Activated CD4-positive, alpha-beta memory T cell treated with anti-CD3 and anti-CD28 coated beads for 36 hours (primary cell): ENCODE measurements at regions of chr5 and their contacts with region 1.

Region 1: GRCh38 chr5:131382407-131383395 is 118.8 kb downstream of the CDC42SE2 start:
- DNase-seq: peak; percentile 58
- H3K4me3 Mint-ChIP-seq: peak overlapping the region; percentile 39
- H3K27ac Mint-ChIP-seq: peak overlapping the region; percentile 94
- H3K4me1 Mint-ChIP-seq: peaks cover 91% of the 10 kb centered on the region
- H3K27me3 Mint-ChIP-seq: no peaks in the 10 kb centered on the region

Region 2: GRCh38 chr5:131186561-131187256 is 196.0 kb before region 1 on chr5:
- CTCF ChIA-PET with region 1: no interaction called
- POLR2A ChIA-PET with region 1: no interaction called
- intact Hi-C with region 1: no loop called
- DNase-seq: no peak
- H3K4me3 Mint-ChIP-seq: no peak overlapping the region
- H3K27ac Mint-ChIP-seq: no peak overlapping the region
- H3K4me1 Mint-ChIP-seq: no peaks in the 10 kb centered on the region
- H3K27me3 Mint-ChIP-seq: no peaks in the 10 kb centered on the region

Region 3: DNA sequence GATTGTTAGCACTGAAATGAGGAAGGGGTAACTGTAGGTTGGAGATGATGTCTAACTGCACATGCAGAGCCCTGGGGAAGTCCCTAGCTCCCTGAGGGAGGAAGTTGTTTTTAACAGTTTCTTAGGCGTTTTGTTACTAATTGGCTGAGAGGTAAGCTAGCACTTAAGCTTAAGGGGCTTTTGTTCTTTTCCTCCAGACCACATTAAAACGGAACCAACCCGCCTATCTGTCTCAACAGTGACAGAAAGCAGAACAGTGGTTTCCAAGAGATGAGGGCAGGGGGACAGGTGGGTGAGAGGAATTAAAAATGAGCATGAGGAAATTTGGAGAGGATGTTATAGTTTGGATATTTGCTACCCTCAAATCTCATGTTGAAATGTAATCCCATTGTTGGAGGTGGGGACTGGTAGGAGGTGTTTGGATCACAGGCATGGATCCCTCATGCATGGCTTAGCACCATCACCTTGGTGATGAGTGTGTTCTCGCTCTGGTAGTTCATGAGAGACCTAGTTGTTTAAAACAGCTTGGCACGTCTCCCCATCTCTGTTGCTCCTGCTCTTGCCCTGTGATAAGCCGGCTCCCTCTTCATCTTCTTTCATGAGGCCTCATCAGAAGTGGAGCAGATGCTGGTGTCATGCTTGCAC is 173.1 kb before region 1 on chr5:
- CTCF ChIA-PET with region 1: interaction called, 3 read pairs
- POLR2A ChIA-PET with region 1: interaction called, 3 read pairs
- intact Hi-C with region 1: loop called (anchors 2 kb)
- DNase-seq: peak; percentile 65
- H3K4me3 Mint-ChIP-seq: peak overlapping the region; percentile 71
- H3K27ac Mint-ChIP-seq: peak overlapping the region; percentile 95
- H3K4me1 Mint-ChIP-seq: peaks cover 49% of the 10 kb centered on the region
- H3K27me3 Mint-ChIP-seq: no peaks in the 10 kb centered on the region

Region 4: DNA sequence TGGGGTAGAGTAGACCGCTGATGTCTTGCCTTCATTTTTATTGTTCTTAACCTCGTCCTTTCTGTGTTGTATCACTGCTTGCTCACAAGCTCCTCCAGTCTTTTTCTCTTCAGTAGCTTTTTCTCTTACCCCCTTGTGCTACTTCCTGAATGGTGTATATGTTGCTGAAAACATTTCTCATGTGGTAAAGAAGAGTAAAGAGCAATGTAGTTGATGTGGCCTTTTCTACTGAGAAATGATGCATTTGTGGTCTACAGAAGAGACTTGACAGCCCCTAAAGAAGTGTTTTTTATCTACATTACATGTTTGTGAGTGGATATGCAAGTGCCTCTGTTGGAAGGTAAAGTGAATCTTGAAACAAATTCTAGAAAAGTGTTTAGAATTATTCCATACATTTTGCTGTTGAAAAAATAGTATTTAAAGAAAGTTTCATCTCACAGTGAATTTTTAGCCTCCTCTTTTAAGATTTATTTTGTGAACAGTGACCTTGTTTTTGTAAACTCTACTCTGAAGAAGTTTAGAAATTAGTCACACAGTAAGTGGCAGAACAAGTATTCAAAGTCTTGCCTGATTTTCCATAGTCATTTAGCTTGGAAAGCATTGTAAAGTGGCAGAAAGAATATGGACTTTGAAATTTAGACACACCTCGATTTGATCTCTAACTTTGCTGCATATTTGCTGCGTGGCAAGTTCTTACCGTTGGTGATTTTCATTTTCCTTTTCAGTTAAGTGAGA is 101.4 kb before region 1 on chr5:
- CTCF ChIA-PET with region 1: interaction called, 10 read pairs
- POLR2A ChIA-PET with region 1: interaction called, 4 read pairs
- intact Hi-C with region 1: loop called (anchors 1 kb)
- DNase-seq: no peak
- H3K4me3 Mint-ChIP-seq: peak overlapping the region; percentile 68
- H3K27ac Mint-ChIP-seq: peak overlapping the region; percentile 98
- H3K4me1 Mint-ChIP-seq: peaks cover 86% of the 10 kb centered on the region
- H3K27me3 Mint-ChIP-seq: no peaks in the 10 kb centered on the region

Region 5: DNA sequence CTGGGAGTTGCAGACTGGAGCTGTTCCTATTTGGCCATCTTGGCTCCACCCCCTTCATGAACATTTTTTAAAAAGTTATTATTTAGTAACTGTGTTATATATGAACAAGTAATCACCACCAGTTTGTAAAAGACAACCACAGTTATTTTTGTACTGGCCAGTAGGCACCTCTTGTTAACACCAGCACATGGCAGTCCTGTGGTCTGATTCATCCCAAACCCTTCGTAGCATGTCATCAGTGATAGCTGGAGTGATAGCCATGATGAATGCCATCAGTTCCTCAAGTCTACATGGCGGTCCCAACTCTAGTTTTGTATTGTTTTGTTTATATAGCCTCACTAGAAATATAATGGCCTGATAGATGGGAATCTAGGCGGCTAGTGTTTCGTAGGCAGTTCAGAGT is 44.6 kb before region 1 on chr5:
- CTCF ChIA-PET with region 1: no interaction called
- POLR2A ChIA-PET with region 1: no interaction called
- intact Hi-C with region 1: loop called (anchors 2 kb)
- DNase-seq: no peak
- H3K4me3 Mint-ChIP-seq: peak overlapping the region; percentile 73
- H3K27ac Mint-ChIP-seq: peak overlapping the region; percentile 85
- H3K4me1 Mint-ChIP-seq: peaks cover 87% of the 10 kb centered on the region
- H3K27me3 Mint-ChIP-seq: no peaks in the 10 kb centered on the region

Region 6: DNA sequence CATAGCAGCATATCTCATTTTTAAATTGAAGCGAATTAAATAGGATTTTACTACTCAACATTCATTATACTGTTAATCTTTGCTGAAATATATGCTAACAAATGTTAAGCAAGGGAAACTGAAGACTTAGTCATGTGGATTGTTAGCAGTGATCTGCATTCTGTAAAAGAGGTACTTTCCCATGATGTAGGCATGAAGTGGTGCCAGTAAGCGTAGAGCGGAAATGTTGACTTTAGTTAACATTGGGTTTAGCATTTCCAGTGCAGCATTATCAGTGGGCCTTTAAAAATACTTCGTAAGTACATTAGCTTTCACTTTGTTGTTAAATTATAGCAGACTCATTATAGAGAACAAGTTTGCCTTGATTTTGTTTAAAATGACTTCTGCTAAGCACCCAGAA is 11.4 kb after region 1 on chr5:
- CTCF ChIA-PET with region 1: interaction called, 16 read pairs
- POLR2A ChIA-PET with region 1: interaction called, 14 read pairs
- intact Hi-C with region 1: loop called (anchors 1 kb)
- DNase-seq: peak; percentile 69
- H3K4me3 Mint-ChIP-seq: peak overlapping the region; percentile 66
- H3K27ac Mint-ChIP-seq: peak overlapping the region; percentile 93
- H3K4me1 Mint-ChIP-seq: peaks cover 86% of the 10 kb centered on the region
- H3K27me3 Mint-ChIP-seq: no peaks in the 10 kb centered on the region